Right cardiac atrium (tissue), 5 donors: ENCODE measurements at regions of chr1 and their contacts with region 1.

Region 1: DNA sequence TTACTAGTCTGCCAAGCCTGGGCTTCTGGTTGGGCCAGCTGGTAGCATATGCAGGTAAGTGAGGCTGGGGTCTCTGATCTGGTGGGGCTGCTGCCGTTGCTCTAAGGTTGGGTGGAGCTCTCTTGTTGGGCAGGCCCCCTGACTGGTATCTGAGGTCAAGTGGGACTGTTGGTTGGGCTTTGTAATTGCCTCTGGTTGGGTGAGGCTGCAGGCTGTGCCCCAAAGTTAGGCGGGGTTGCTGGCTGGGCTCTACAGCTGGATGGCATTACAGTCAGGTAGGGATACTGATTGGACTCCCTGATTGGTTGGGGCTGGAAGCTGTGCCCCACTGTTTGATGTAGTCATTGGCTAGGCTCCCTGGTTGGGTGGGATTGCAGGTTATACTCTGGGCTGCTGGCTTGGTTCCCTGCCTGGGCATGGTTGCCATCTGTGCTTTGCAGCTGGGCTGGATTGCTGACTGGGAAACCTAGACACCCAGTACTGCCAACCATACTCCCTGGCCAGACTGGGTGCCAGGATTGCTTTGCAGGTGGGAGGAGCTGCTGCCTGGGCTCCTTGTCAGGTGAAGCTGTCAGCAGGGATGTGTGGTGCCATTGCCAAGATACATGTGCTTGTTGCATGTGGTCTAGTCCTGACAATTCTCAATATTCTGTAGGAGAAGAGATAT is 130.5 kb downstream of the RABGAP1L start:
- DNase-seq: peak in 2 of 3 donors; percentile 42 to 55
- ATAC-seq: peak in 1 of 2 donors; percentile 67
- H3K4me3 ChIP-seq: no peak overlapping the region
- H3K27ac ChIP-seq: no peak overlapping the region
- H3K4me1 ChIP-seq: peaks cover 4% of the 10 kb centered on the region
- H3K27me3 ChIP-seq: no peaks in the 10 kb centered on the region

Region 2: DNA sequence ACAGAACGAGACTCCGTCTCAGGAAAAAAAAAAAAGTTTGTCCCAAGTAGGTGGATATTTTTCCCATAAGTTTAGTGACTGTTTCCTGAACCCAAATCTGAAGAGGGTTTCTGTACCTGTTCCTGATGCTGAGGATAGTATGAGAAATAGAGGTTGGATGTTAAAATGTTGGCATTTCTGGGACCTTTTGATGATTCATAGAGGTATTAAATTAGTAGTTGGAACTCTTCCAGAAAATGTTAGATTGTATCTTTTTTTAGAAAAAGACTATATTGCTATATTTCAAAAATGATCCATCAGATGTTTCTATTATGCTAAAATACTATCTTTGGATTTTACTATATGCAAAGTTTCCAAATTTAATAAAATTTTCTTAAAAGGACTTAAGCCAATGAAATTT is 462.2 kb before region 1 on chr1:
- intact Hi-C with region 1: no loop called
- DNase-seq: no peak
- ATAC-seq: no peak
- H3K4me3 ChIP-seq: no peak overlapping the region
- H3K27ac ChIP-seq: no peak overlapping the region
- H3K4me1 ChIP-seq: no peaks in the 10 kb centered on the region
- H3K27me3 ChIP-seq: no peaks in the 10 kb centered on the region

Region 3: DNA sequence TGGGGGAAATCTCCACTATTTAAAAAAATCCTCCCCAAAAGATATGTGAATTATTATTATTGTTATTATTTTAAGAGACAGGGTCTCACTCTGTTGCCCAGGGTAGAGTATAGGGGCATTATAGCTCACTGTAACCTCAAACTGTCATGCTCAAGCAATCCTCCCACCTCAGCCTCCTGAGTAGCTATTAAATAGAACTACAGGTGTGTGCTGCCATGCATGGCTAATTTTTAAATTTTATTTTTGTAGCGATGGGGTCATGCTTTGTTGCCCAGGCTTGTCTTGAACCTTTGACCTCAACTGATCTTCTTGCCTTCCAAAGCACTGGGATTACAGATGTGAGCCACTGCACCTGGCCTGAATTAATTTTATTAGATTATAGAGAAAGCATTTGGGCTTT is 13.7 kb before region 1 on chr1:
- intact Hi-C with region 1: loop called in 1 of 4 experiments (anchors 1 kb)
- DNase-seq: no peak
- ATAC-seq: no peak
- H3K4me3 ChIP-seq: no peak overlapping the region
- H3K27ac ChIP-seq: no peak overlapping the region
- H3K4me1 ChIP-seq: peaks cover 2% of the 10 kb centered on the region
- H3K27me3 ChIP-seq: no peaks in the 10 kb centered on the region

Region 4: DNA sequence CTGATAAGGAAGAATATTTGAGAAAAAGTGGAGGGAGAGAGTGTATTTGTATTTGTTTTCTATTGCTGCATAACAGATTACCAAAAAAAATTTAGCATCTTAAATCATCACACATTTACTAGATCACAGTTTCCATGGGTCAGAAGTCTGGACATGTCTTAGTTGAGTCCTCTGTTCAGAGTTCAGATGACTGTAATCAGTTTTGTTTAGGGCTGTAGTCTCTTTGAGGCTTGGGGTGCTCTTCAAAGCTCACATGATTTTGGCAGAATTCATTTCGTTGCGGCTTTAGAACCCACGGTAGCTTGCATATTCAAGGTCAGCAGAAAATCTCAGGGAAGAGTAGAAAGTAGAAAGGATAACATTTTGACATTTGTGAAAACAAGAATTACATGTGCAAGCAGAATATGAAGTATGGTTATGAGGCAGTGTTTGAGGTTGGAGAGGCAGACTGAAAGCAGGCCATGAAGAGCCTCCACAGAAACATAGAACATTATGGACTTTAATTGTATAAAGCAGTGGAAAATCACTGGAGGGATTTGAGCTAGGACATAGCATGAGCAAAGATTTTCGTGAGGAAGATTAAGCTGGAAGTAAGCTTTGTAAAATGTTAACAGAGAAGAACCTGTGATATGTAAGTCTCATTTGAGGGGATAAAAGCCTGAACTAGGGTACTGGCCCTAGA is 47.4 kb after region 1 on chr1:
- intact Hi-C with region 1: no loop called
- DNase-seq: no peak
- ATAC-seq: no peak
- H3K4me3 ChIP-seq: no peak overlapping the region
- H3K27ac ChIP-seq: no peak overlapping the region
- H3K4me1 ChIP-seq: peaks cover 2% of the 10 kb centered on the region
- H3K27me3 ChIP-seq: no peaks in the 10 kb centered on the region

Region 5: GRCh38 chr1:174407665-174408064 is 117.9 kb after region 1 on chr1:
- intact Hi-C with region 1: no loop called
- DNase-seq: no peak
- ATAC-seq: no peak
- H3K4me3 ChIP-seq: no peak overlapping the region
- H3K27ac ChIP-seq: no peak overlapping the region
- H3K4me1 ChIP-seq: no peaks in the 10 kb centered on the region
- H3K27me3 ChIP-seq: no peaks in the 10 kb centered on the region

Region 6: DNA sequence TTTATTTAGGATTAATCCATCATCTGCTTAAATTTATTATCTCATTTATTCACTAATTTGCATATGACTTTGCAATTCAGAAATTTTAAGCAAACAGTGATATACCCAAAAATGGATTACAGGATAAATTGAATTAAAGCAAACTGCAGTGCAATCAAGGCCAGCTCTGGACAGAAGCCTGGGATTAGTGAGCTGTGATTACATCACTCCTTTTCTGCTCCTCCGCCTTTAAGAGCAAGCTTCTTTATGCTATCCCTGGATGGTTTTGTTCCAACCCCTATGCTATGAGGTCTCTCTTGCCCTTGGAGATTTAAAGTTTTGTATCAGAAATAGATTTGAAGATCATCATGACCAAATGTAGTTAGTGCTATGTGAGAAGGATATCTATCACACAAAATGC is 190.5 kb after region 1 on chr1:
- intact Hi-C with region 1: no loop called
- DNase-seq: peak in 1 of 3 donors; percentile 16
- ATAC-seq: no peak
- H3K4me3 ChIP-seq: no peak overlapping the region
- H3K27ac ChIP-seq: no peak overlapping the region
- H3K4me1 ChIP-seq: peaks cover 3% of the 10 kb centered on the region
- H3K27me3 ChIP-seq: no peaks in the 10 kb centered on the region